Activated B cell treated with CpG ODN at 0.5 μM for 24 hours (primary cell): ENCODE measurements at regions of chr20 and their contacts with region 1.

Region 1: GRCh38 chr20:51022803-51023630 is at the start of gene KCNG1:
- DNase-seq: peak; percentile 49
- ATAC-seq: peak; percentile 89
- H3K4me3 Mint-ChIP-seq: peak within 1 kb of the TSS; percentile 78
- H3K27ac Mint-ChIP-seq: peak within 1 kb of the TSS; percentile 31
- H3K4me1 Mint-ChIP-seq: peaks cover 16% of the 10 kb centered on the region
- H3K27me3 Mint-ChIP-seq: peaks cover 36% of the 10 kb centered on the region
- CTCF ChIP-seq: no peak
- total RNA-seq, gene KCNG1: 7.2 and 7.4 TPM in 2 replicates

Region 2: DNA sequence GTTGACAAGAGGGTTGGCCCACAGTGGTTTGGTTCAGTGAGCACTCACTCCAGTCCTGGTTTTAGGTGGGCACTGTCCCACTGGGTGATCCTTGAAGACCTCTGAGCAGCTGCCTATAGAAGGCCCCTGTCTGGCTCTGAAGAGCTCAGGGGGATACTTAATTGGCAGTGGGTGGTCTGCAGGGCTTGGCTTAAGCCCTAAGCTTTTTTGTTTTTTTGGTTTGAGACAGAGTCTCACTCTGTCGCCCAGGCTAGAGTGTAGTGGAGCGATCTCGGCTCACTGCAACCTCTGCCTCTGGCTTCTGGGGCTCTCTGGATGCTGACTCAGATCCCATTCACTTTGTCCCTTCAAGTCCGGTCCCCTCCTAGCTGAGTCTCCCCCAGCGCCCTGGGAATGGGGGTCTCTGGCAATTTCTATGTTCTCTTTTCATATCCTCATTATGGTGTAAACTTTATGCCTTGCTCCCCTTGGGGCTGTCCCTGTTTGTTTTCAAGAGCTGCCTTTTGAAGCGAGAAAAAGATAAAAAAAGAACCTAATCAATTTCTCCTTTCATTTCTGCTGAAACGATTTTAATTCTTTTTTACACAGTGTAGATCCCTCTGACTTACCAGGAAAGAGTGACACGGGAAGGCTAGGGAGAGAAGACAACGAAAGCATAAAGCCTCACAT is 12.1 kb after region 1 on chr20:
- CTCF ChIA-PET with region 1: no interaction called
- POLR2A ChIA-PET with region 1: interaction called, 4 read pairs
- intact Hi-C with region 1: loop called (anchors 1 kb)
- DNase-seq: no peak
- ATAC-seq: peak; percentile 33
- H3K4me3 Mint-ChIP-seq: peak overlapping the region; percentile 41
- H3K27ac Mint-ChIP-seq: peak overlapping the region; percentile 35
- H3K4me1 Mint-ChIP-seq: peaks cover 35% of the 10 kb centered on the region
- H3K27me3 Mint-ChIP-seq: peaks cover 23% of the 10 kb centered on the region
- CTCF ChIP-seq: no peak

Region 3: DNA sequence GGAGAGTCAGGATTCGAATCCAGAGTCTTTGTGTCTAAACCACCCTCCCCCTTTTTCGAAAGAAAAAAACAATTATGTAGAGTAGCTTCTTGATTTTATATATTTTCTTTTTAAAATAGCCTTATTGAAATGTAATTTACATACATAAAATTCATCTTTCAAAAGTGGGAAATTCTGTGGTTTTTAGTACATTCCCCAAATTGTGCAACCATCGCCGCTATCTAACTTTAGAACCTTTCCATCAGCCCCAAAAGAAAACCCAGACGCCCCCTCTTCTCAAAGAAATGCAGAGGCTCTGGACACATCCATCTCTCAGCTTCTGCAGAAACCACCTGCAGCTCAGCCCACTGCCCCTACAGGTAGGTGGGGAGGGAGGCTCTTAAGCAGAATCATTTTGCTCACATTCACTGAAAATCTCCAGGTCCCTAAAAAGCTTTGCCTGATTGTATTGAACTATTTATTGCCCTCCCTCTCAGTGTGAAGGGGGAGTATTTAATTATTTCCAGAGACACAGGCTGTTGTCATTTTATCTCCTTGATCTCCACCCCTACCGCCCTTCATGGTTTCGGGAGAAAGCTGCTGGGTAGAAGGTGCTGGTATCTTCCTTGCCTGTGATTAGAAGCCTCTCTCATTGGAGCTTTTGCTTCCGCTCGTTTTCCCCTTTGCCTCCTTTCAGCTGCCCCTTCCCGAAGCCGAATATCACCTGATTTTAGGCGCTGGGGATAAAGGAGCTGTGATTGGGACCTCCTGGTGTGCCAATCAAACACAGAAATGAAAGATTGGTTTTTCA is 68.6 kb after region 1 on chr20:
- CTCF ChIA-PET with region 1: no interaction called
- POLR2A ChIA-PET with region 1: no interaction called
- intact Hi-C with region 1: loop called (anchors 5 kb)
- DNase-seq: no peak
- ATAC-seq: no peak
- H3K4me3 Mint-ChIP-seq: peak overlapping the region; percentile 65
- H3K27ac Mint-ChIP-seq: peak overlapping the region; percentile 57
- H3K4me1 Mint-ChIP-seq: peaks cover 40% of the 10 kb centered on the region
- H3K27me3 Mint-ChIP-seq: peaks cover 26% of the 10 kb centered on the region
- CTCF ChIP-seq: no peak